ENCODE measurements at regions of chr12 and their contacts with region 1.

Region 1: GRCh38 chr12:79886917-79887519 is 47.9 kb downstream of the PPP1R12A start:
- DNase-seq: peak; percentile 54
- ATAC-seq: peak; percentile 90
- H3K4me3 ChIP-seq: no peak overlapping the region
- H3K27ac ChIP-seq: no peak overlapping the region
- H3K4me1 ChIP-seq: peaks cover 15% of the 10 kb centered on the region
- H3K27me3 ChIP-seq: no peaks in the 10 kb centered on the region
- CTCF ChIP-seq: peak; percentile 66
- EP300 ChIP-seq: no peak
- POLR2A ChIP-seq: no peak
- RAD21 ChIP-seq: 0 out of 2 replicates have a peak, but pooled peaks have one; percentile 38

Region 2: GRCh38 chr12:79407671-79408622 is 479.1 kb before region 1 on chr12:
- CTCF ChIA-PET with region 1: interaction called, 3 read pairs
- POLR2A ChIA-PET with region 1: no interaction called
- in situ Hi-C with region 1: no loop called
- intact Hi-C with region 1: loop called (anchors 2 kb)
- DNase-seq: peak; percentile 74
- ATAC-seq: peak; percentile 100
- H3K4me3 ChIP-seq: no peak overlapping the region
- H3K27ac ChIP-seq: no peak overlapping the region
- H3K4me1 ChIP-seq: peaks cover 8% of the 10 kb centered on the region; the same call in 1 of the 2 replicates
- H3K27me3 ChIP-seq: no peaks in the 10 kb centered on the region
- CTCF ChIP-seq: peak; percentile 89
- EP300 ChIP-seq: no peak
- POLR2A ChIP-seq: no peak
- RAD21 ChIP-seq: peak; percentile 81

Region 3: DNA sequence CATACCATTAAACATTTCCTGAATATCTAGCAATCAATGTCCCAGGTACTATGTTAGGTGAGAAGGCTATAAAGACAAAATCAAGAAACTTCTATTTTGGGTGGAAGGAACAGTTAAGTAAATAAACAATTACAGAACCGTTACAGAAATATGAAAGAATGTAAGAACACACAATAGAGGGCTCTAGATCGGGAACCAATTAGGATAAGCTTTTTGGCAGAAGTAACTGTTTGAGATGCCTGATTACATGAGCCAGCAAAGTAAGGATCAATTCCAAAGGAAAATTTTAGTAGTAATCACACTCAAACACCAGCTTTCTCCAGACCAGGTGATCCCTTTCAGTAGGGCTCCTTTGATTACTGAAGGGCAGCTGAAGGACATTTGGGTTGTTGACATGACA is 13.9 kb after region 1 on chr12:
- CTCF ChIA-PET with region 1: no interaction called
- POLR2A ChIA-PET with region 1: no interaction called
- in situ Hi-C with region 1: no loop called
- intact Hi-C with region 1: loop called (anchors 1 kb)
- DNase-seq: no peak
- ATAC-seq: no peak
- H3K4me3 ChIP-seq: no peak overlapping the region
- H3K27ac ChIP-seq: peak overlapping the region; percentile 24
- H3K4me1 ChIP-seq: peaks cover 42% of the 10 kb centered on the region
- H3K27me3 ChIP-seq: no peaks in the 10 kb centered on the region
- CTCF ChIP-seq: no peak
- EP300 ChIP-seq: no peak
- POLR2A ChIP-seq: no peak
- RAD21 ChIP-seq: no peak

Region 4: DNA sequence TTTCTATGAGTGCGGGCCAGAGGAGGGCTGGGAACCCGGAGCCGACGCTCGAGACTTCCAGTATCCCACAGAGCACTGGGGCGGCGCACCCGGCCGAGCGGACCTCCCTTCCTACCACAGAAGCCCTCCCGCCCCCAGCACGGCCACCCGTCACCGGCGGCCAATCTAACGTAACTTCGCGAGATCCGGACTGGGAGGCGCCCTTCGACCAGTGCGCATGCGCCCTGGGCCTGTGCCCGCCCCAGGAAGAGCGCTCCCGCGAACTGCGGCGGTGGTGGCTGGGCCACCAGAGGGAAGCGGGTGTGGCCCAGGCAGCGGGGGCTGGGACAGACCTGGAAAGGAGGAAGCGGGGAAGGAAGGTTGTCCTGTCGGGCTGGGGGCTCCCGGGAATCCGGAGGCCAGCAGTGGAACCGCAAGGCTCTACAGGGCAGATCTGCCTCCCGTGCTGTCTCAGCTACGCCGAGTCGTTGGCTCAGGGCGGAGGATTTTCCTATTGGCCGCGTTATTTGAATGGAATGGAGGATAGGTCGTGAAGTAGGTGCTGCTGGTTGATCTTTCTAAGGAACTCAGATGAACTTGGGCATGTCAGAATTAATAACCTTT is 48.1 kb after region 1 on chr12 and contains the start of gene PPP1R12A:
- CTCF ChIA-PET with region 1: no interaction called
- POLR2A ChIA-PET with region 1: no interaction called
- in situ Hi-C with region 1: no loop called
- intact Hi-C with region 1: loop called (anchors 5 kb)
- DNase-seq: peak; percentile 93
- ATAC-seq: peak; percentile 96
- H3K4me3 ChIP-seq: peak within 1 kb of the TSS; percentile 74 to 100 (median 98)
- H3K27ac ChIP-seq: peak within 1 kb of the TSS; percentile 95
- H3K4me1 ChIP-seq: peaks cover 28% of the 10 kb centered on the region
- H3K27me3 ChIP-seq: no peaks in the 10 kb centered on the region; a peak in 1 of 5 replicates
- CTCF ChIP-seq: peak; percentile 34; the same call in 1 of the 2 replicates
- EP300 ChIP-seq: no peak
- POLR2A ChIP-seq: peak; percentile 87 to 90
- RAD21 ChIP-seq: 0 out of 2 replicates have a peak, but pooled peaks have one; percentile 53
- total RNA-seq, gene PPP1R12A: 38.1 and 50.0 TPM in 2 replicates

Region 5: GRCh38 chr12:79997096-79997791 is 110.2 kb after region 1 on chr12:
- CTCF ChIA-PET with region 1: no interaction called
- POLR2A ChIA-PET with region 1: no interaction called
- in situ Hi-C with region 1: no loop called
- intact Hi-C with region 1: loop called (anchors 5 kb)
- DNase-seq: no peak
- ATAC-seq: no peak
- H3K4me3 ChIP-seq: no peak overlapping the region
- H3K27ac ChIP-seq: no peak overlapping the region
- H3K4me1 ChIP-seq: no peaks in the 10 kb centered on the region; the same call in 1 of the 2 replicates
- H3K27me3 ChIP-seq: no peaks in the 10 kb centered on the region
- CTCF ChIP-seq: no peak
- EP300 ChIP-seq: no peak
- POLR2A ChIP-seq: no peak
- RAD21 ChIP-seq: no peak

Region 6: DNA sequence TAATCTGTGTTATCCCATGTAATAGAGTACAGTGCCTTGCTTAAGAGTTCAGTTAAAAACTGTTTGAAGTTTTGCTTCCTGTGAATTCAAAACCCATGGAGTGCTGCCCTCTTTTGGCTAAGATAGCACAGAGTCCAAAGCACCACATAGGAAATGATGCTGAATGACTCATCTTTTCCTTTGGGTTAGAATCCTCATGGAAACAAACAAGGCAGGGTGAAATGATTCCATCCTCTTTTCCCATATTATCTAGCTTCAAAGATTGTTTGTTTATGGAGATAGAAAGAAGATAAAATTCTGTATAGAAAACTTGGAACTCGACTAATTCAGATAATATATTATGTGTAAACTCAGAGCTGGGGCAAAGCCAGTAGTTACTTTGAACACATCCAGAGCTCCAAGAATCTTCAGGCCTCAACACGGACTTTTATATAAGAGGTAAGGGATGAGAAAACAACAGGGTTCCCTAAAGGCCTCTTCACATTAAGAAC is 299.8 kb after region 1 on chr12:
- CTCF ChIA-PET with region 1: no interaction called
- POLR2A ChIA-PET with region 1: no interaction called
- in situ Hi-C with region 1: no loop called
- intact Hi-C with region 1: loop called (anchors 1 kb)
- DNase-seq: peak; percentile 82
- ATAC-seq: peak; percentile 95
- H3K4me3 ChIP-seq: no peak overlapping the region
- H3K27ac ChIP-seq: no peak overlapping the region
- H3K4me1 ChIP-seq: peaks cover 4% of the 10 kb centered on the region; the same call in 1 of the 2 replicates
- H3K27me3 ChIP-seq: no peaks in the 10 kb centered on the region
- CTCF ChIP-seq: peak; percentile 85
- EP300 ChIP-seq: no peak
- POLR2A ChIP-seq: no peak
- RAD21 ChIP-seq: peak; percentile 61; the same call in 1 of the 2 replicates

Region 7: GRCh38 chr12:80269803-80270552 is 383.0 kb after region 1 on chr12:
- CTCF ChIA-PET with region 1: interaction called, 3 read pairs
- POLR2A ChIA-PET with region 1: no interaction called
- in situ Hi-C with region 1: no loop called
- intact Hi-C with region 1: loop called (anchors 2 kb)
- DNase-seq: peak; percentile 24
- ATAC-seq: peak; percentile 77
- H3K4me3 ChIP-seq: no peak overlapping the region
- H3K27ac ChIP-seq: no peak overlapping the region
- H3K4me1 ChIP-seq: no peaks in the 10 kb centered on the region
- H3K27me3 ChIP-seq: no peaks in the 10 kb centered on the region
- CTCF ChIP-seq: peak; percentile 68
- EP300 ChIP-seq: no peak
- POLR2A ChIP-seq: no peak
- RAD21 ChIP-seq: no peak